ENCODE measurements at regions of chr6 and their contacts with region 1.

Region 1: DNA sequence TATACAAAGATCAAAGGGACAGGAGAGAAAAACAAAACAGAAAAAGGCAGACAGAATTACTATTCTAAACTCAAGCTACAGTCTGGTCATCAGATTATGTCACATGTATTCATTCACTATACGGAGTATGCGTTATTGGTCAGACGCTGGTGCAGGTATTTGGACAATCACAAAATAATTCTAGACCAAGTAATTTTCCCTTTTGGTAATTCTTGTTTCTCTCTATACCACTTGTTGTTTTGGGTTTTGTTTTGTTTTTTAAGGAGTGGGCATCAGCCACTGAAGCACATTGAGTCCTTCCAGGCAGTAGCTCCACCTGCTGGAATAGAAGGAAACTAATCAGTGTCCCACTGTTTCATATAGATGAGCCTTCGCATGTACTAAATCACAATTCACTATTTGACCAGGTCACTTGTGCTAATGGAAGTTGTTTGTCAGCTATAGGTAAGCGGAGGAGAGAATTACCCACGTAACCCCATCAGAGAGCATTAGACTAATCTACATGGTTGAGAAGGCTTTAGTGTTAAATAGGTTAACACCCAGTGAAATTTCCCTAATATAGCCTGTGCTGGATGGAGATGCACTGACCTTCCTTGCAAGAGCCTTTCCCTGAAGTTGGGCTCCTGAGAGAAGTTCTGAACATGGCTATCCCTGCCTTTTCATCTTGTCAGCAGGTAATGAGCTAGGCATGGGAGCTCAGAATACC is 77.9 kb downstream of the TNFAIP3 start:
- DNase-seq: peak; percentile 45
- CTCF ChIP-seq: peak; percentile 55

Region 2: DNA sequence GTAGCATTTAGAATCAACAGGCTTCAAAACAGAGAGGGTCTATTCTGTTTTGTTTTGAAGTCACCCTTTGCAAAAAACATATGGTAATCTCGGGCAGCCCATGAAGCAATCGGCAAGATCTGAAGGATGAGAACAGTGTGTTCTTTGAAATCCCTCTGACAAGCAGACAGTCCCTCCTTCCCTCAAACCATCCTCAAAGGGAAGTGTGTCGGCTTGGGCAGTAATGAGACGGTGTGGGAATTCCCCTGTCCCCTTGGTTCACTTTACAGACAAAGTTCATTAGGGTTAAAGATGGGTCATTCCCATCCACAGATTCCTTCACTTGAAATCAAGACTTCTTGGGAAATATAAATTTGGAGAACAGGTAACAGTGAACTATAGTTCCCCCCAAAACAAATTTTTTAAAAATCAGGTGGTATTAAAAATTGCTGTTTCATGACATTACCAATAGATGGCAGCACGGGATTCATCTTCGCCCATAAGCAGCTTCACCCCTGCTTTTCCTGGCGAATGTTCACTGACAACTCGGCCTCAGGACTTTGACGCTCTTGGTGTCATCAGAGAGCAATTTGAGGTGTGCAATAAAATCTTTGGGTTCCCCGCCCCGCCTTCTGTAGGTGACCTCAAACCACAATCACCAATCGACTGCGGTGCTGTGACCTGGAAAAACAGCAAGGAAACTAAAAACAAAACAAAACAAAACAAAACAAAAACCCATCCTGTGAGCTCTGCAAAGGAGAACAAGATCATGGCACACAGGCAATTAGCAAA is 237.2 kb before region 1 on chr6:
- CTCF ChIA-PET with region 1: interaction called, 41 read pairs
- POLR2A ChIA-PET with region 1: interaction called, 4 read pairs
- DNase-seq: peak; percentile 67
- CTCF ChIP-seq: peak; percentile 62

Region 3: DNA sequence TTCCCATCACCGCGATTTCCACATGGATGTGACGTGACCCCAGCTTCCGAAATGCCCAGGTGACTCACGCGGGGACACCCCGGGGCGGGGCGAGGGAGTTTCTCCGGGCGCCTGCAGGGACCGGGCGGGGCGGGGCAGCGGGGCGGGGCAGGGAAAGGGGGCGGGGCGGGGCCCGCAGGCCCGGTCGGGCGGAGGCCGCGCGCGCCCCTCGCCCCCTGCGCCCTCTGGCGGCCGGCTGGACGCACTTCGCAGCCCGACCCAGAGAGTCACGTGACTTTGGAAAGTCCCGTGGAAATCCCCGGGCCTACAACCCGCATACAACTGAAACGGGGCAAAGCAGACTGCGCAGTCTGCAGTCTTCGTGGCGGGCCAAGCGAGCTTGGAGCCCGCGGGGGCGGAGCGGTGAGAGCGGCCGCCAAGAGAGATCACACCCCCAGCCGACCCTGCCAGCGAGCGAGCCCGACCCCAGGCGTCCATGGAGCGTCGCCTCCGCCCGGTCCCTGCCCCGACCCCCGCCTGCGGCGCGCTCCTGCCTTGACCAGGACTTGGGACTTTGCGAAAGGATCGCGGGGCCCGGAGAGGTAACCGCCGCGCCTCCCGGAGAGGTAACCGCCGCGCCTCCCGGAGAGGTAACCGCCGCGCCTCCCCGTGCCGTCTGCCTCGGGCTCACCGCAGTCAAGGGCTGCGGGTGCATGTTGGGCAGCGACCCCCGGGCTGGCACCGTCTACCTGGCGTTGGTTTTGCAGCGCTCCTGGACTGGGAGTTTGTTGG is 77.8 kb before region 1 on chr6 and contains the start of gene TNFAIP3:
- CTCF ChIA-PET with region 1: interaction called, 138 read pairs
- POLR2A ChIA-PET with region 1: interaction called, 10 read pairs
- DNase-seq: peak; percentile 96
- CTCF ChIP-seq: peak; percentile 87

Region 4: GRCh38 chr6:137910424-137910834 is 34.5 kb before region 1 on chr6:
- CTCF ChIA-PET with region 1: interaction called, 26 read pairs
- POLR2A ChIA-PET with region 1: no interaction called
- DNase-seq: no peak
- CTCF ChIP-seq: no peak

Region 5: DNA sequence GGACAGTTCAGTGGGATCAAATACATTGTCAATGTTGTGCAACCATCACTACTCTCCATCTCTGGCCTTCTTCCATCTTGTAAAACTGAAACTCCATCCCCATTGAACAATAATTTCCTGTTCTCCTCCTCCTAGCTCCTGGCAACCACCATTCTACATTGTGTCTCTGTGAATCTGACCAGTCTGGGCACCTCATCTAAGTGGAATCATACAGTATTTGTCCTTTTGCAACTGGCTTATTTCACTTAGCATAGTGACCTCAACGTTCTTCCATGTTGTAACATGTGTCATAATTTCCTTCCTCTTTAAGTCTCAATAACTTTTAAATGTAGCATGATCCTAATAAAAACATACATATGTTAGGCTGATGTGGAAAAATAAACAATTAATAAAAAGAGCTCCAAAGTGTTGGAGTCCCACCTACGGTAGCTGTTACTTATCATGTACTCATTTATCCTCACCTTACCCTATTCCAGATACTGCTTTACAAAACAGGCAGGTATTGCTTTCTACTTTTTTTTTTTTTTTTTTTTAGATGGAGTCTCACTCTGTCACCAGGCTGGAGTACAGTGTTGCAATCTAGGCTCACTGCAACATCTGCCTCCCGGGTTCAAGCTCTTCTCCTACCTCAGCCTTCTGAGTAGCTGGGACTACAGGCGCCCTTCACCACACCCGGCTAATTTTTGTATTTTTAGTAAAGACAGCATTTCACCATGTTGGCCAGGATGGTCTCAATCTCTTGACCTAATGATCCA is 14.0 kb after region 1 on chr6:
- CTCF ChIA-PET with region 1: interaction called, 30 read pairs
- POLR2A ChIA-PET with region 1: no interaction called
- DNase-seq: no peak
- CTCF ChIP-seq: no peak

Region 6: GRCh38 chr6:138001750-138002349 is 56.9 kb after region 1 on chr6:
- CTCF ChIA-PET with region 1: interaction called, 120 read pairs
- POLR2A ChIA-PET with region 1: no interaction called
- DNase-seq: peak; percentile 40
- CTCF ChIP-seq: peak; percentile 95

Region 7: GRCh38 chr6:138017166-138017757 is 72.3 kb after region 1 on chr6:
- CTCF ChIA-PET with region 1: no interaction called
- POLR2A ChIA-PET with region 1: no interaction called
- DNase-seq: no peak
- CTCF ChIP-seq: no peak